ENCODE measurements at regions of chrX and their contacts with region 1.

Region 1: DNA sequence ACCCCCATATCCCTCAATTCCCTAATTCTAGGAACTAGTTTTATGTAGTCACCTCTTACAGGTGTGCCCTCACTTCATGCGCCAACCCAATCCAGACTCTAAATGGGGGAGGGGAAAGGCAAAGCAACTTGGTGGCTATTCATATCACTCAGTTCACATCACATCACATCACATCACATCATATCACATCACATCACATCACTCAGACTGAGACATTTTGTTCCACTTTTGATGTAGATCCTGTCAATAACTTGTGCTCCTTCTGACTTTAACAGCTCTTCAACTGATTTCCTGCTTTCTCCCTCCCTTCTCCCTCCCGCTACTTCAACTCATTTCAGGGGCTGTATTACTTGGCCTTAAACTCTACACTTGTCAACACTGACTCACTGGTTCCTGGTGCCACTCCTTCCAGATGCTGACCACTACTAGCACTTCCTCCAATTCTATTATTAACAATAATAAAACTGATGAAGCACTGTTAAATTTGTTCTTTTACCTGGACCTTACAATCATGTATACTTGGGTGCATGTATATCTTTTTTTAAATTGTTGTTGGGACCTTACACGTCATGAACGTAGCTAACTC is 29.1 kb upstream of the PLS3 start:
- DNase-seq: no peak

Region 2: DNA sequence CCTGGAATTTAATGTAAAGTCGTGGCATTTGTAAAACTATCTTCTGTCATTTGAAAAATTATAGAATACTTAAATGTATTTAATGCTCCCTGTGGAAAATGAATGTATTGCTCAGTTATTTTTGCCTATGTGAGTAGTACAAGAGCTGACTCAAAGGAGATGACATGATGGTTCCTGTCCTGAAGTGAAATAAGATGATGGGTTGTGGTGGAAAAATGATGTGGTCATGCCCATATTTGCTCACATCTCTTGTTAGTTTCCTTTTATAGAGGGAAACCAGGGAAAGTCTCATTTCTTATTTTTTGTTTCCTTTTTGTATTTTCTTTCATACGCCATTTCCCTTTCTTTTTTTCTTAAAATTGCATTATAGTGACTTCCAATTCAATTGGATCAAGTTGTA is 52.8 kb after region 1 on chrX:
- intact Hi-C with region 1: loop called (anchors 2 kb)
- DNase-seq: no peak

Region 3: DNA sequence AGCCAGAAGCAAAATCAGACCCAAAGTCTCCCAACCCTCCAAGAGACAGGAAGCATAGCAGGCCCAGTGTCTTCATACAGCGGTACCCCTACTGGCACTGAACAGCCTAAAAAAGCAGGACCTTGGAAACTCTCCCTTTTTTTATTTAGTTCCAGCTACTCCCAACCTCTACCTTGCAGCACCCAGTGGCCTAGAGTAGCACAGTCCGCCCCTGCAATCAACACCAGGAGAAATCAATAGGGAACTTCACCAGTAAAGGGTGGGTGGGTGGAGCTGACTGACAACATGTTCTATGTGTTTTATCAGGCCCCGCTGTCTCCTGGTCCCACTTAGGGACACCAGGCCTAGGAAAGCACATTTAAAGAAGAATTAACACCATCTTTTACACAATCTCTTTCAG is 1309.4 kb after region 1 on chrX:
- intact Hi-C with region 1: no loop called
- DNase-seq: no peak